ENCODE measurements at regions of chr2 and their contacts with region 1.

Region 1: DNA sequence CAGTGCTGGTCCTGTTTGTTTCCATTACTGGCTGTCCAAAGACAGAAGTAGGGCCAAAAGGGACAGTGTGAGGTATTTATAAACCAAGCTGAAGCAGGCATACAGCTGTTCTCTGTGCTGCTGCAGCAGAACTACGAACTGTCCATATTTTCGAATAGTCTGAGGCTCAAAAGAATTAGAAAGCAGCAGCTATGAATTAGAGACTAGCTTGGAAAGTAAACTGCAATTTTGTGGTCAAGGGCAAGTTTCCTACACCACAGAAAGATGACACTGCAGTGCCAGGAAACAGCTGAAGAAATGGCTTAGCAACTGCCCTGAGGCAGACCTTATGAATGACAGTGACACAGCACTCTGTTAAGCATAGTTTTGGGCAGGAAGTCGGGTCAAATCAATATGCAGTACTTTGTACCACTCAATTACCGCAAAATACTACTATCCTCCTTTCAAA is 125.3 kb downstream of the TMEM131 start:
- DNase-seq: no peak

Region 2: GRCh38 chr2:97718051-97718882 is 152.2 kb before region 1 on chr2:
- intact Hi-C with region 1: no loop called
- DNase-seq: no peak

Region 3: GRCh38 chr2:97745474-97746174 is 124.8 kb before region 1 on chr2:
- intact Hi-C with region 1: no loop called
- DNase-seq: peak; percentile 41

Region 4: DNA sequence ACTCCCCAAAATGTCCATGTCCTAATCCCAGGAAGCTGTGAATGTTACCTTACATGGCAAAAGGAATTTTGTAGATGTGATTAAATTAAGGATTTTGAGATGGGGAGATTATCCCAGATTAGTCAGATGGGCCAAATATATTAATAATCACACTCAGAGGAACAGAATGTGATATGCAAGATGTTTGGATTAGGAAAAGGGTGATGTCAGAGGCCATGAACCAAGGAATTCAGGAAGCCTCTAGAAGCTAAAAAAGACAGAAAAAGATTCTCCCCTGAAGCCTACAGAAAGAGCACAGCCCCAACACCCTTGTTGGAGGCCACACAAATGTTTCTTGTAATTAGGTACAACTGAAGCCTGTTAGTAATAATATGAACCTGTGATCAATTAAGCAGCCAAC is 112.2 kb after region 1 on chr2:
- intact Hi-C with region 1: no loop called
- DNase-seq: no peak

Region 5: DNA sequence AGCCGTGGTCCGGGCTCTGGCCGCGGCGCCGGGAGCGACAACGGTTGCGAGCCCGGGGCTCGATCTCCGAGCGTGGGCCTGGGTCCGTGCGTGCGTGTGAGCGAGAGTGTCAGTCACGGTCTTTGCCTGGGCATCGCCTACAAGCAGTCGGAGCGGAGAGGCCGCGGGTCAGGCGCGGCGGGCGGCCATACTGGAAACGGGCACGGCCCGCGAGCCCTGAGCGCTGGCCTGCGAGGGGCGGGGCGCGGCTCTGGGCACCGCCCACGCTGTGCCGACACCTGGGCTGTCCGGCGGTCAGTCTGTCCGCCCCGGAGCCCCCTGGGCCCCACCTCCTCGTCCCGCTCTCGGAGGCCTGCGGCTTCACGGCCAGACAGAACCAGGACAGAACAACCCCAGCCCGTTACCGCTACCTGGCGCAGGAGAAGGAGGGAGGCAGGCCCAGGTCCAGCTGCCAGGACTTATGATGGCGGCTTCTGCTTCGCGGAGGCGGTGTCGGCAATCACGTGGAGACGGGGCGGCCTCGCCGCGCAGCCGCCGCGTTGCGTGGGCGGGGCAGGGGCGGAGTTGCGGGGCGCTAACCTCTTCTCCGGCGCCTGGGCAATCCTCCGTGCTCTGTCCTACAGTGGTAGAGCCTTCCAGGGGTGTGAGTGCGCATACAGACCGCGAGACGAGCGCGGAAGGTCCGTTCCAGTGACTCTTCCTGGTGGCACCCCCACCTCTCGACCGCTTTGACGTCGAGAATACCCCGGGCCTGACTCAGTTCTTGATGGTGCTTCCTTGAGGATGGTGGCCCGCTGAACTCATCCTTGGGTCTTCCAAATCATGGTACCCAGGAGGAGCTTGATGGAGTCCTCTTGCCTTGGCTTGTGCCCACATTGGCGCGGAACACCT is 125.6 kb after region 1 on chr2 and contains the start of gene TMEM131:
- intact Hi-C with region 1: loop called (anchors 5 kb)
- DNase-seq: peak; percentile 98
- total RNA-seq, gene TMEM131: 28.6 TPM

Region 6: GRCh38 chr2:98149333-98149697 is 278.9 kb after region 1 on chr2:
- intact Hi-C with region 1: no loop called
- DNase-seq: peak; percentile 63

Measured in cardiac septum (tissue), 1 donor.